ENCODE measurements at regions of chr10 and their contacts with region 1.

Region 1: DNA sequence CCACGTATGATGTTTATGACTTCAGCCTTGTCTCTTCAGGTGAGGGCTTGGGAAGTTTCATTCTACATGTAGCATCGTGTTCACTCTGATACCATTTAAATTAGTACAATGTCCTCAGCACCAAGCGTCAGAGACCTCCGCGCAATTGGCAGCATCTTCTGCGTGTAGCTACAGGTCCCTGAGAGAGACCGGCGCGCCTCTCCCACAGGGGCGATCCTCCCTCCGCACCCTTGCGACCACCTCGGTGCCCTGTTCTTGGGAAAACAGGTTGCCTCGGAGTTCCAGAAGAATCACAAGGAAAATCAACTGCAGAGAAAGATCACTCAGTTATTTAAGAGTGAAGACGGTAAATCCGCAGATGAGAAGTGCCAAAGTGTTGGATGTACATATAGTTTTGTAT is 206.2 kb downstream of the GATA3 start:
- DNase-seq: no peak

Region 2: GRCh38 chr10:8360365-8360764 is 99.7 kb after region 1 on chr10:
- intact Hi-C with region 1: no loop called
- DNase-seq: no peak

Region 3: DNA sequence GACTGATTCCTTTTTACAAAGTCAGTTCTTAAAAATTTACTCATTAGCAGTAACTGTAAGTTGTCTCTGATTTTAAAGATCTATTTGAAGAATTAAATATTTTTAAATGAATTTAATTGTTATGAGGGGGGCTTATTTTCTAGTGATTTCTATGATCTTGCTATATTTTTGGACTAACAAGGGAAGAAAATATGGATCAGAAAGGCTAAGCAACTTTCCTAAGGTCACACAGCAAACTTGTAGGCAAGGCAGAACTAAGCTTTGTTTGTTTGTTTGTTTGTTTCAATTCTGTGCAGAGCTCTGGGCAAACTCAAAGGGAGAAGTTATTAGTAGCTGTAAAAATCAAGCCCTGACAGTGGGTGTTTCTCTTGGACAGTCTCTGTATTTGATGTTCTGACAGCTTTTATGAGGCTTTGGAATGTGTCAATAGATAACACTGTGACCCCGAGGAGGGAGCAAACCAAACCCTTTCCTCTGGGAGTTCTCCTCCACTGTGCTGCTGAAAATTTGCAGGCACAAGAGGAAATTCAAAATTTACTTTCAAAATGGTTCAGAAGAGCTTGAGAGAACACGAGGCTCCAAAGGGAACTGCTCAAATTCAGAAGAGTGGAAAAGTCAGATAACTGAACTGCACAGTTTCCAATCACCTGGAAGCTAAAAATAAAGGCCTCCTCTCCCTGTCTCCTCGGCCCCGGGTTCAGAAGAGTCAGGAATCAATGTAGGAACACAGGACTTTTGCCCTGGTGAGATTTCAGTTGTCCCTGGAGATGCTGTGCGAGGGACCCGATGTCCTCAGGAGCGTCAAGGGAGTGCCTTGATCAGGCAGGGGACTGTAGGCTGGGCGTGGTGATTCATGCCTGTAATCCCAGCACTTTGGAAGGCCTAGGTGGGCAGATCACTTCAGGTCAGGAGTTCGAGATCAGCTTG is 119.5 kb after region 1 on chr10:
- intact Hi-C with region 1: no loop called
- DNase-seq: no peak

Region 4: GRCh38 chr10:9239305-9239704 is 978.7 kb after region 1 on chr10:
- intact Hi-C with region 1: no loop called
- DNase-seq: no peak

Region 5: GRCh38 chr10:9275861-9276260 is 1015.2 kb after region 1 on chr10:
- intact Hi-C with region 1: loop called in 1 of 2 experiments (anchors 5 kb)
- DNase-seq: no peak